ENCODE measurements at regions of chr19 and their contacts with region 1.

Region 1: GRCh38 chr19:49073514-49074378 is 1.2 kb upstream of the KCNA7 start:
- DNase-seq: no peak
- ATAC-seq: no peak
- H3K4me3 ChIP-seq: no peak overlapping the region
- H3K4me3 Mint-ChIP-seq: peak overlapping the region; percentile 11 to 82 (median 72)
- H3K27ac ChIP-seq: no peak overlapping the region
- H3K27ac Mint-ChIP-seq: peak overlapping the region in 3 of 9 donors; percentile 4 to 62 (median 7)
- H3K4me1 ChIP-seq: no peaks in the 10 kb centered on the region
- H3K4me1 Mint-ChIP-seq: peaks cover 7 to 20% (median 13%) of the 10 kb centered on the region in 7 donors
- H3K27me3 ChIP-seq: peaks cover 4 to 12% of the 10 kb centered on the region in 2 donors
- H3K27me3 Mint-ChIP-seq: peaks cover 48 to 73% (median 53%) of the 10 kb centered on the region in 5 donors

Region 2: GRCh38 chr19:48780631-48781391 is 292.9 kb before region 1 on chr19:
- CTCF ChIA-PET with region 1: no interaction called
- POLR2A ChIA-PET with region 1: no interaction called
- intact Hi-C with region 1: loop called in 1 of 2 experiments (anchors 5 kb)
- DNase-seq: no peak
- ATAC-seq: peak; percentile 43
- H3K4me3 ChIP-seq: no peak overlapping the region
- H3K4me3 Mint-ChIP-seq: no peak overlapping the region
- H3K27ac ChIP-seq: no peak overlapping the region
- H3K27ac Mint-ChIP-seq: no peak overlapping the region
- H3K4me1 ChIP-seq: no peaks in the 10 kb centered on the region
- H3K4me1 Mint-ChIP-seq: peaks cover 0 to 4% (median 3%) of the 10 kb centered on the region in 7 donors
- H3K27me3 ChIP-seq: no peaks in the 10 kb centered on the region
- H3K27me3 Mint-ChIP-seq: peaks cover 0 to 7% (median 4%) of the 10 kb centered on the region in 5 donors

Region 3: DNA sequence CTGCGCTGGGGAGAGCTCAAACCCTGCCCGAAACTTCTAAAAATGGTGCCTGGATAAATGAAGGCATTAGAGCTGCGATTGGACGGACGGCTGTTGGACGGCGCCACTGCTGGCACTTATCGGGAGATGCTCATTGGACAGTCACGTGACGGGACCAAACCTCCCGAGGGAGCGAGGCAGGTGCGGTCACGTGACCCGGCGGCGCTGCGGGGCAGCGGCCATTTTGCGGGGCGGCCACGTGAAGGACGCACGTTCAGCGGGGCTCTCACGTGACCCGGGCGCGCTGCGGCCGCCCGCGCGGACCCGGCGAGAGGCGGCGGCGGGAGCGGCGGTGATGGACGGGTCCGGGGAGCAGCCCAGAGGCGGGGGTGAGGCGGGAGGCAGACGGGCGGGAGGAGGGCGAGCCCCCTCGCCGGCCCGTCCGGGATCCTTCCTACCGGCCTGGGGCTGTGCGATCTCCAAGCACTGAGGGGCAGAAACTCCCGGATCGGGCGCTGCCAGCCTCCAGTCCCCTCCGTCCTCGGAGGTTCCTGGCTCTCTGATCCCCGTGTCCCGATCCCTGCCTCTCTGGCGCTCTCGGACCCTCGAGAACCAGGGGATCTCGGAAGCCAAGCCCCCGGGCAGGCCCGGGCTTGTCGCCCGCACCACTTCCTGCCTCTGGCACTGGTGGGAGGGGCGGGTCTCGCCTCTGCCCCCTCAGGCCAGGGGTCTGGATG is 119.0 kb before region 1 on chr19 and contains the start of gene BAX:
- CTCF ChIA-PET with region 1: no interaction called
- POLR2A ChIA-PET with region 1: no interaction called
- intact Hi-C with region 1: no loop called
- DNase-seq: peak; percentile 59 to 96 (median 71)
- ATAC-seq: peak; percentile 92
- H3K4me3 ChIP-seq: peak within 1 kb of the TSS; percentile 65
- H3K4me3 Mint-ChIP-seq: peak within 1 kb of the TSS; percentile 88 to 95 (median 94)
- H3K27ac ChIP-seq: peak within 1 kb of the TSS; percentile 85
- H3K27ac Mint-ChIP-seq: peak within 1 kb of the TSS; percentile 77 to 94 (median 91)
- H3K4me1 ChIP-seq: peaks cover 12 to 19% of the 10 kb centered on the region in 2 donors
- H3K4me1 Mint-ChIP-seq: peaks cover 26 to 46% (median 38%) of the 10 kb centered on the region in 7 donors
- H3K27me3 ChIP-seq: no peaks in the 10 kb centered on the region
- H3K27me3 Mint-ChIP-seq: peaks cover 0 to 2% (median 0%) of the 10 kb centered on the region in 5 donors
- total RNA-seq, gene BAX: 78.7 to 355 (median 122) TPM

Region 4: GRCh38 chr19:49118565-49119410 is 45.0 kb after region 1 on chr19 and contains the start of gene C19orf73:
- CTCF ChIA-PET with region 1: no interaction called
- POLR2A ChIA-PET with region 1: no interaction called
- intact Hi-C with region 1: no loop called
- DNase-seq: peak; percentile 93 to 98 (median 97)
- ATAC-seq: peak; percentile 91
- H3K4me3 ChIP-seq: peak within 1 kb of the TSS; percentile 83
- H3K4me3 Mint-ChIP-seq: peak within 1 kb of the TSS; percentile 83 to 91 (median 88)
- H3K27ac ChIP-seq: peak within 1 kb of the TSS; percentile 92
- H3K27ac Mint-ChIP-seq: peak within 1 kb of the TSS; percentile 89 to 95 (median 93)
- H3K4me1 ChIP-seq: peaks cover 13 to 16% of the 10 kb centered on the region in 2 donors
- H3K4me1 Mint-ChIP-seq: peaks cover 25 to 43% (median 39%) of the 10 kb centered on the region in 7 donors
- H3K27me3 ChIP-seq: no peaks in the 10 kb centered on the region
- H3K27me3 Mint-ChIP-seq: peaks cover 0 to 27% (median 0%) of the 10 kb centered on the region in 5 donors
- total RNA-seq, gene C19orf73: 1.3 to 2.8 (median 2.2) TPM

Measured in naive thymus-derived CD4-positive, alpha-beta T cell (primary cell).